ENCODE measurements at regions of chr14 and their contacts with region 1.

Region 1: DNA sequence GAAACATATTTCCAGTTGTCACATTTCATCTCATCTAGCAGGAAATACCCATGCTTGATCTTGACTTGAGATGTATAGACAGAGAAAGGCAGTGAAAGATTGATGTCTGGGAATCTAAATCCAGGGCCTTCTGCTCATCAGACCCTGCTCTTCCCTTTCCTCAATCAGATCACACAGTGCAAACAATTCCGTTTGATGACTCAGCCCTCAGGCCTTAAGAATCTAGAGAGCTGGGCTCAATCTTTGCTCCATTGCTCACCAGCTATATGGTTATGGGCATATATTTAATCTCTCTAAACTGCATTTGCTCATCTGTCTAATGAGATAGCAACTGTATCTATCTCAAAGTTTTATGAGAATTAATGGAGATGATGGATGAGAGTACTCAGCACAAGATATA is 201.8 kb upstream of the CCDC196 start:
- DNase-seq: peak; percentile 76
- ATAC-seq: peak; percentile 98
- H3K4me3 ChIP-seq: no peak overlapping the region
- H3K27ac ChIP-seq: no peak overlapping the region
- H3K4me1 ChIP-seq: no peaks in the 10 kb centered on the region
- H3K27me3 ChIP-seq: peaks cover 18% of the 10 kb centered on the region; the same call in 1 of the 2 replicates
- CTCF ChIP-seq: no peak

Region 2: DNA sequence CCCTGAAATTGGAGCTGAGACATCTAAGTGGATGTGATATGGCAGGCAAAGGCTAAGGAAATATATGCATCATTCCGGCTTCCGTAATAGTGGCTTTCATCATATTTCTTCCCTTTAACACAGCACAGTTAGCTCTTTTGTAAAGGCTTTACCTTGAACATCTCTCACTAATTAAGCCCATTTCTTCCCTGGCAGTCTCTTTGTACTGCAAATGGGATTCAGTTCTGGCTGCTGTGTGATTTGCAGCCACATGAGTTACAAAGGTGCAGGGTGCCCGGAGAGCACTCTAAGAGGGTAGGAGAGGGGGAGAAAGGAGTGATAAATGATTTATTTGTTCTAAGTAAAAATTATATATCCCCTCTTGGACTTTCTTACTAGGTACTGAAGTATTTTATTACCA is 30.3 kb before region 1 on chr14:
- CTCF ChIA-PET with region 1: no interaction called
- POLR2A ChIA-PET with region 1: no interaction called
- intact Hi-C with region 1: no loop called
- DNase-seq: no peak
- ATAC-seq: no peak
- H3K4me3 ChIP-seq: no peak overlapping the region
- H3K27ac ChIP-seq: no peak overlapping the region
- H3K4me1 ChIP-seq: no peaks in the 10 kb centered on the region
- H3K27me3 ChIP-seq: peaks cover 41% of the 10 kb centered on the region
- CTCF ChIP-seq: no peak

Region 3: GRCh38 chr14:66268802-66269334 is 15.5 kb before region 1 on chr14:
- CTCF ChIA-PET with region 1: no interaction called
- POLR2A ChIA-PET with region 1: interaction called, 14 read pairs
- intact Hi-C with region 1: no loop called
- DNase-seq: no peak
- ATAC-seq: no peak
- H3K4me3 ChIP-seq: no peak overlapping the region
- H3K27ac ChIP-seq: no peak overlapping the region
- H3K4me1 ChIP-seq: no peaks in the 10 kb centered on the region
- H3K27me3 ChIP-seq: peaks cover 19% of the 10 kb centered on the region; the same call in 1 of the 2 replicates
- CTCF ChIP-seq: no peak

Region 4: DNA sequence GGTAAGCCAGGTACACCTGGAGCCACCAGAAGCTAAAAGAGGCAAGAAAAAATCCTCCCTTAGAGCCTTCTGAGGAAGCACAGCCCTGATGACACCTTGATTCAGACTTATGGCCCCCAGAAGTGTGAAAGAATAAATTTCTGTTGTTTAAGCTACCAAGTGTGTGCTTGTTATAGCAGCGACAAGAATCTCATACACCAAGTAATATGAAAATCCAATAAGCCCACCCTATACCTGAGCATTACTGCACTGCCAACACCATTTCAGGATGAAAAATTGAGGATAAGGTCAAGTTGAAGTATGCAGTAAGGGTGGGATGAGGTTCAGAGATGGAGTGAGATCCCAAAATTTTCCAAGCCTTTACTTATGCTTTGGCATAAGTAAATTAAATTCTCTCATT is 38.2 kb after region 1 on chr14:
- CTCF ChIA-PET with region 1: no interaction called
- POLR2A ChIA-PET with region 1: no interaction called
- intact Hi-C with region 1: no loop called
- DNase-seq: no peak
- ATAC-seq: no peak
- H3K4me3 ChIP-seq: no peak overlapping the region
- H3K27ac ChIP-seq: no peak overlapping the region
- H3K4me1 ChIP-seq: no peaks in the 10 kb centered on the region
- H3K27me3 ChIP-seq: peaks cover 25% of the 10 kb centered on the region; the same call in 1 of the 2 replicates
- CTCF ChIP-seq: no peak